H1 (cell line): ENCODE measurements at regions of chr16 and their contacts with region 1.

Region 1: DNA sequence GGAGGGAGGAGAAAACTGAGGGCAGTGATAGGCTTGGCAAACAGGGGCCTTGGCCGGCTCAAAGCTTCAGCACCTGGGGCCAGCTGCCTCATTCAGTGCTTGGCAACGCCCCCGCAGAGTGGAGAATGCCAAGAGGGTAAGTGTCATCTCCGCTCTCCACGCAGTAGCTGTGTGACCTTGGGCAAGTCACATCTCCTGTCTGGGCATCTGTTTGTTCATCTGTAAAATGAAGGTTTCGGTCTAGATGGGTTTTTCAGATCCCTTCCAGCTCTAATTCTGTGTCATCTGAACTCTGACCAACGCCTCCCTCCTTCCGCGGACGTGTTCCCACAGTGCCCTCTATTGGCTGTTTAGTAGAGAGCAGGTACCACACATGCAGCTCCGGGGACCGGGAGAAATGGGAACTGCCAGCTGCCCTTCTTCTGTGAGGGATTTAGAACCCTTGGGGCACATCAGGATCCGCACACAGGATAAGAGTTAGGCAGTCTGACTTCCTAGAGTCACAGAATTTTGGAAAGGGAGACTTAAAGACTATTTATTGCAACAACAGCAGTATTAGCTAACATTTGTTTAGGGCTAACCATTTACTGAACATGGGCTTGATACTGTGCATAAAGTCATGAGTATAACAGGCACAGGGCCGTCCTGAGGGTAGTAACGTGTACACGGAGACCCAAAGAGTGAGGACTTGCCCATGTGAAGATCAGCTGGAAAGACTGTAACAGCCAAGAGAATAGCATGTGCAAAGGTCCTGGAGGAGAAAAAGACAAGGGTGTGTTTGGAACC is 26.8 kb downstream of the GP2 start:
- DNase-seq: peak; percentile 47 to 72
- H3K4me3 ChIP-seq: no peak overlapping the region
- H3K27ac ChIP-seq: no peak overlapping the region
- H3K4me1 ChIP-seq: no peaks in the 10 kb centered on the region; a peak in 1 of 7 replicates
- H3K27me3 ChIP-seq: no peaks in the 10 kb centered on the region
- CTCF ChIP-seq: peak; percentile 74 to 90 (median 88)
- EP300 ChIP-seq: no peak
- POLR2A ChIP-seq: no peak
- RAD21 ChIP-seq: peak; percentile 97 to 99

Region 2: DNA sequence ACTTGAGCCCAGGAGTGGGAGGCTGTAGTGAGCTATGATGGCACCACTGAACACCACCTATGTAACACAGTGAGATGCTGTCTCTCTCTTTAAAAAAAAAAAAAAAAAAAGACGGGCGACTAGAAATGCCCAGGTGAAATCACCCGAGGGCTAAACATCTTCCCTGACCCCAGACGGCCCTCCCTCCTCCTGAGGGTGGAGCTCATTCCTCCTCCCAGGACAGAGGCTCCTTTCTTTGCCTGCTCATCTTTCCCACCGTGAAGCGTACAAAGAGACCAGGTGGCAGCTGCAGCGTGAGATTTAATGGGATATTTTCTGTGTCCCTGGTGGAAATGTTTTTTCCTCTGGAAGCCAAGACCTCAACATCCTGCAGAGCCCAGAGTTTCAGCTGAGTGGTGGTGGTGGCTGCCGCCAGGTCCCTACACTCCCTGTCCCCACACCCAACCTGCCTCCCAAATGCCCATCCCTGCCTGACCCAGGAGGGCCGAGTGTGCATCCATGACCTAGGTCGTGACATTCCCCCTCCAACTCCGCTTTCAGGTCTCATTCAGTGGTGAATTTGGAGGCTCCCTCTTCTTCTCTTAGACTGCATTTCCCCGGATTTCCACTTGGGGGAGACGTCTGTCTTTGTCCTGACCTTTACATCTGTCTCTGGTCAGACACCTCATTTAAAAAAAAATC is 401.4 kb before region 1 on chr16:
- CTCF ChIA-PET with region 1: interaction called, 55 read pairs
- POLR2A ChIA-PET with region 1: no interaction called
- DNase-seq: peak in 1 of 2 experiments; percentile 86
- H3K4me3 ChIP-seq: no peak overlapping the region
- H3K27ac ChIP-seq: no peak overlapping the region; the same call in 1 of the 2 replicates
- H3K4me1 ChIP-seq: peaks cover 0 to 7% (median 4%) of the 10 kb centered on the region in 4 experiments; a peak in 5 of 7 replicates
- H3K27me3 ChIP-seq: no peaks in the 10 kb centered on the region
- CTCF ChIP-seq: peak; percentile 27 to 86 (median 73)
- EP300 ChIP-seq: no peak
- POLR2A ChIP-seq: no peak
- RAD21 ChIP-seq: peak; percentile 94 to 95

Region 3: DNA sequence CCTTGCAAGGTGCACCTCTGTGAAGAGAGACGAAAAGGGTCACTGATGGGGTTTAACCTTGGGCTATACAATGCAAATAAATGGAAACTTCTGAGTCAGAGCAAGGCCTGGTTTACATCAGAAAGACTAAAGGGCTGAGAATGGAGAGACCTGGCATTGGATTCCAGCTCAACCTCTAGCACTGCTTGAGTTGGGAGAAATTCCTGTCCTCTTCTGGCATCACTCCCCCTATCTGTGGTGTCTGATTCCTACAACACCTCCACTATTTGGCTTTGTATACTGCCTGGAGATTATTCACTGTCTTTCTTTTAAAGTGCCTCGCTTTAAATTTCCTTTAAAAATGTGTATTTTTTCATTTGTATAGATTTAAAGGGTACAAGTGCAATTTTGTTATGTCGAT is 295.6 kb before region 1 on chr16:
- CTCF ChIA-PET with region 1: interaction called, 13 read pairs
- POLR2A ChIA-PET with region 1: no interaction called
- DNase-seq: peak in 1 of 2 experiments; percentile 36
- H3K4me3 ChIP-seq: no peak overlapping the region
- H3K27ac ChIP-seq: no peak overlapping the region
- H3K4me1 ChIP-seq: peaks cover 0 to 5% (median 2%) of the 10 kb centered on the region in 4 experiments; a peak in 4 of 7 replicates
- H3K27me3 ChIP-seq: no peaks in the 10 kb centered on the region
- CTCF ChIP-seq: peak; percentile 29 to 73 (median 60)
- EP300 ChIP-seq: no peak
- POLR2A ChIP-seq: no peak
- RAD21 ChIP-seq: peak; percentile 44 to 69; a peak in 3 of 4 replicates

Region 4: DNA sequence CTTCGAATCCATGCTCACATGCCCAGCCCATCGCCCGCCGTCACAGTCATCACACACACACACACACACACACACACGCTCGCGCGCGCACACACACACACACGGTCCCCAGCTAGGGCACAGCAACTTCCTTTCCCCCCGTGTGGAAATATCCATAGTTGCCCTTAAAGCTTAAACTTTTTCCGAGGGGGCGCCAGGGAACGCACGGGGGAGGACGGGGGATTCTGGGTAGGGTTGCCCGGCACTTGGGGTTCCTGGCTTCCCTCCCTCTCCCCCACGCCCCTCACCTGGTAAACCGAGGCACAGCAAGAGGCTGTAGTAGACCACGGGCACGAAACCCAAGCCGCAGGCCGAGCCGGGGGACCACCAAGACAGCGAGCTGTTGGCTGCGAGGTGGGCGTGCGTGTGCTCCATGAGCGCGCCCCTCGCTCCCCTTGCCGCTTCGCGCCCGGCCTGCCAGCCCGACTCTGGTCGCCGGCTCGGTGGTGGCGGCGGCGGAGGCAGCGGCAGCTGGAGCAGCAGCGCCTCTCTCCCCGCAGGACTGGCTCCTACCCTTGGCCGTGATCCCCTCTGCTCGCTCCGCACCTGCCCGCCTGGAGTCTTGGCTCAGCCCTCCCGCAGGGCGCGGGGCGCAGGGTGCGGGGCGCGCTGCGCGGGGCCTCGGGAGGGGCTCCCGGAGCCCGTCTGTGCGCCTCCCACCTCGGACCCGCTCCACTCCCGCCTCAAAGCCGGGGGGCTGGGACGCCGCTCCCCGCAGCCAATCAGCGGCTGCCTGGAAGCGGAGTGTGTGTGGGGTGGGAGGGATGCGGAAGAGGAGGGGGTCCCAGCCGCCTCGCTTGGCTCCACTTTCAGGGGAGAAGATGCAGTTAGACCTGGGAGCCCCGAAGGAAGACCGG is 227.1 kb before region 1 on chr16 and contains the start of gene GPR139:
- CTCF ChIA-PET with region 1: interaction called, 13 read pairs
- POLR2A ChIA-PET with region 1: no interaction called
- DNase-seq: peak in 1 of 2 experiments; percentile 83
- H3K4me3 ChIP-seq: peak within 1 kb of the TSS; percentile 54 to 67 (median 59)
- H3K27ac ChIP-seq: no peak within 1 kb of the TSS
- H3K4me1 ChIP-seq: peaks cover 7 to 23% (median 15%) of the 10 kb centered on the region in 4 experiments
- H3K27me3 ChIP-seq: peaks cover 3 to 37% (median 34%) of the 10 kb centered on the region in 4 experiments
- CTCF ChIP-seq: no peak
- EP300 ChIP-seq: no peak
- POLR2A ChIP-seq: no peak
- RAD21 ChIP-seq: no peak; a peak in 1 of 4 replicates
- total RNA-seq, gene GPR139: 0.73 and 0.84 TPM in 2 replicates

Region 5: GRCh38 chr16:20094157-20094556 is 206.3 kb before region 1 on chr16:
- CTCF ChIA-PET with region 1: interaction called, 19 read pairs
- POLR2A ChIA-PET with region 1: no interaction called
- DNase-seq: no peak
- H3K4me3 ChIP-seq: no peak overlapping the region
- H3K27ac ChIP-seq: no peak overlapping the region
- H3K4me1 ChIP-seq: peaks cover 0 to 1% (median 0%) of the 10 kb centered on the region in 4 experiments; a peak in 2 of 7 replicates
- H3K27me3 ChIP-seq: no peaks in the 10 kb centered on the region
- CTCF ChIP-seq: peak in 2 of 3 experiments; percentile 3 to 21; a peak in 1 of 4 replicates
- EP300 ChIP-seq: no peak
- POLR2A ChIP-seq: no peak
- RAD21 ChIP-seq: peak; percentile 30 to 56; a peak in 3 of 4 replicates

Region 6: DNA sequence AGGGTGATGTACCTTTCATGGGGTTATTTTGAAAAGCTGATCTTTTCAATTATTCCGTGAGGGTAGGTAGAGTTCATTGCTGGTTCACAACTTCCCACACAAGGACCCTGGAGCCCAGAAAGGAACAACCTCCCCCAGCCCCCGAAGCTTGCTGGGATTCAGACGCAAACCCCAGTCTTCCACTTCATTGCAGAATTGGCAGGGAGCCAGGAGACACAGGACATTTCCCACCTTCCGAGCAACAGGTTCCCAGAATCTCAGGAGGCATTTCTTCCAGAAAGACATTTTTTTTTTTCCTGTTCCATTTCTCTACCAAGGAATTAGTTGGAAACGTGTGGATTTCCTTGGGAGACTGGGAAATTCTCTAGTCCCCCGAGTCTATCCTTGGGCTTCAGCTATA is 79.3 kb before region 1 on chr16:
- CTCF ChIA-PET with region 1: no interaction called
- POLR2A ChIA-PET with region 1: no interaction called
- DNase-seq: no peak
- H3K4me3 ChIP-seq: no peak overlapping the region
- H3K27ac ChIP-seq: no peak overlapping the region
- H3K4me1 ChIP-seq: no peaks in the 10 kb centered on the region
- H3K27me3 ChIP-seq: no peaks in the 10 kb centered on the region
- CTCF ChIP-seq: no peak
- EP300 ChIP-seq: no peak
- POLR2A ChIP-seq: no peak
- RAD21 ChIP-seq: no peak

Region 7: DNA sequence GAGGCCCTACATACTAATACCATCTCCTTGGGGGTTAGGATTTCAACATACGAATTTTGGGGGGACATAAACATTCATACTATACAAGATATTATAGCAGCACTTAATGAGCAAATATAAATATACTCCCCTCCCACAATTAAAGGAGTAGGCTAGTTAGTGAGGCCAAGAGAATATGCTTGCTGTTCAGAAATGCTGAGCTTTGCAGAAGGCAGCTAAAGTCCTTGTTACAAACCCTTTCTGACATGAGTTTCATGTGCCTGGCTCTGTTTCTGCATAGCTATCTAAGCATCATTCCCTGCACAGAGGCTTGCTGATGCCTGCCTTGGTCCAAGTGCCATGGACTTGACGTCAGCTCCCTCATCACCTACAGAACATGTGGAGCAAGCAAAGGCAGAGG is 46.7 kb before region 1 on chr16:
- CTCF ChIA-PET with region 1: no interaction called
- POLR2A ChIA-PET with region 1: no interaction called
- DNase-seq: no peak
- H3K4me3 ChIP-seq: no peak overlapping the region
- H3K27ac ChIP-seq: no peak overlapping the region
- H3K4me1 ChIP-seq: peaks cover 0 to 7% (median 1%) of the 10 kb centered on the region in 4 experiments; a peak in 2 of 7 replicates
- H3K27me3 ChIP-seq: no peaks in the 10 kb centered on the region
- CTCF ChIP-seq: no peak
- EP300 ChIP-seq: no peak
- POLR2A ChIP-seq: no peak
- RAD21 ChIP-seq: no peak

Region 8: DNA sequence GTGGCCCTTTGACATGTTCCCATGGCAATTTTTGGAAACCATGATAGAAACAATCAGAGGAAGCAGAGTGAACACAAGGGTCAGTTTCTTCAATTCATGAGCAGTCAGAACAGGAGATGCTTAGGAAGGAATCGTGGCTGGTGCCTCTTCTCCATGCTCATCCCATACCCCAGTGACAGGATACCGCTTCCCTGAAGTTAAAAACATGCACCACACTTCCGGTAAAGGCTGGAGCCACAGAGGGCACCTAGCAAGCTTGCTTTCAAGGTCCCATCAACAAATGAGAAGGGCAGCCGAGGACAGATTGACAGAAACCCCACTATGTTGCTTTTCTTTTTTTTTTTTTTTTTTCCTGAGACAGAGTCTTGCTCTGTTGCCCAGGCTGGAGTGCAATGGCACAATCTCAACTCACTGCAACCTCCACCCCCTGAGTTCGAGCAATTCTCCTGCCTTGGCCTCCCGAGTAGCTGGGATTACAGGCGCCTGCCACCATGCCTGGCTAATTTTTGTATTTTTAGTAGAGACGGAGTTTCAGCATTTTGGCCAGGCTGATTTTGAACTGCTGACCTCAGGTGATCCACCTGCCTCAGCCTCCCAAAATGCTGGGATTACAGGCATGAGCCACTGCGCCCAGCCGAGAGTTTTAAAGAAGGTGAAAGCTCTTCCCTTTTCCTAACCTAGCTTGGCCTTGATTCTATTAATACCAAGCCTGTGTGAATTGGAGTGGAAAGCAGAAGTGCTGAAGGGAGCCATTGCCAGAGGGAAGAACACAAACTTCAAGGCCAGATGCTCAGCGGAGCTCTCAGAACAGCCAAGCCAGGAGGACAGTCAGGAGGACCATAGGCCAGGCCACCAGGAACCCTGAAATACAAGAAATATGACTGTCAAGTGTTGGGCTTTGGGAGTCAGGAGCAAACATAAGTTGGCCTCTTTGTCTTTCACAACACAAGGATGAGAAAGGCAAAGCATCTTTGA is 10.2 kb after region 1 on chr16:
- CTCF ChIA-PET with region 1: interaction called, 12 read pairs
- POLR2A ChIA-PET with region 1: no interaction called
- DNase-seq: no peak
- H3K4me3 ChIP-seq: no peak overlapping the region
- H3K27ac ChIP-seq: no peak overlapping the region
- H3K4me1 ChIP-seq: no peaks in the 10 kb centered on the region
- H3K27me3 ChIP-seq: no peaks in the 10 kb centered on the region
- CTCF ChIP-seq: no peak
- EP300 ChIP-seq: no peak
- POLR2A ChIP-seq: no peak
- RAD21 ChIP-seq: no peak

Region 9: DNA sequence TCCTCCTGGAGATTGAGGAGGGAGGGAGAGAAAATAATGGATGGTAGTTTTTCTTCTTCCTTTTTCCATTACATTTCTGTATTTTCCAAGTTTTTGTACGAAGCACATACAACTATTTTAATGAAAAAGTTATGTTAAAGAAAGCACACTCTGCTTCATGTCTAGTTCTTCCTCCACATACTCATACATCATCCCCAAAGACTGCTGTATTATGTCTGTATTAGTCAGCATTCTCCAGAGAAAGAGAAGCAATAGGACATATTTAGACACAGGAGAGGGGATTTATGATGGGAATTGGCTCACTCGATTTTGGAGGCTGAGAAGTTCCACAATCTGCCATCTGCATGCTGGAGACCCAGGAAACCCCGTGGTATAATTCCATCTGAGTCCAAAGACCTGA is 140.7 kb after region 1 on chr16:
- CTCF ChIA-PET with region 1: no interaction called
- POLR2A ChIA-PET with region 1: no interaction called
- DNase-seq: no peak
- H3K4me3 ChIP-seq: no peak overlapping the region
- H3K27ac ChIP-seq: no peak overlapping the region
- H3K4me1 ChIP-seq: no peaks in the 10 kb centered on the region
- H3K27me3 ChIP-seq: no peaks in the 10 kb centered on the region
- CTCF ChIP-seq: no peak
- EP300 ChIP-seq: no peak
- POLR2A ChIP-seq: no peak
- RAD21 ChIP-seq: no peak